ENCODE measurements at regions of chr19 and their contacts with region 1.

Region 1: GRCh38 chr19:18349524-18350128 is 9.2 kb downstream of the PGPEP1 start:
- H3K4me3 Mint-ChIP-seq: no peak overlapping the region
- H3K27ac Mint-ChIP-seq: no peak overlapping the region
- H3K4me1 Mint-ChIP-seq: peaks cover 24% of the 10 kb centered on the region
- H3K27me3 Mint-ChIP-seq: no peaks in the 10 kb centered on the region

Region 2: GRCh38 chr19:18408053-18408476 is 58.4 kb after region 1 on chr19:
- intact Hi-C with region 1: loop called (anchors 2 kb)
- H3K4me3 Mint-ChIP-seq: no peak overlapping the region
- H3K27ac Mint-ChIP-seq: no peak overlapping the region
- H3K4me1 Mint-ChIP-seq: peaks cover 27% of the 10 kb centered on the region
- H3K27me3 Mint-ChIP-seq: peaks cover 14% of the 10 kb centered on the region

Region 3: DNA sequence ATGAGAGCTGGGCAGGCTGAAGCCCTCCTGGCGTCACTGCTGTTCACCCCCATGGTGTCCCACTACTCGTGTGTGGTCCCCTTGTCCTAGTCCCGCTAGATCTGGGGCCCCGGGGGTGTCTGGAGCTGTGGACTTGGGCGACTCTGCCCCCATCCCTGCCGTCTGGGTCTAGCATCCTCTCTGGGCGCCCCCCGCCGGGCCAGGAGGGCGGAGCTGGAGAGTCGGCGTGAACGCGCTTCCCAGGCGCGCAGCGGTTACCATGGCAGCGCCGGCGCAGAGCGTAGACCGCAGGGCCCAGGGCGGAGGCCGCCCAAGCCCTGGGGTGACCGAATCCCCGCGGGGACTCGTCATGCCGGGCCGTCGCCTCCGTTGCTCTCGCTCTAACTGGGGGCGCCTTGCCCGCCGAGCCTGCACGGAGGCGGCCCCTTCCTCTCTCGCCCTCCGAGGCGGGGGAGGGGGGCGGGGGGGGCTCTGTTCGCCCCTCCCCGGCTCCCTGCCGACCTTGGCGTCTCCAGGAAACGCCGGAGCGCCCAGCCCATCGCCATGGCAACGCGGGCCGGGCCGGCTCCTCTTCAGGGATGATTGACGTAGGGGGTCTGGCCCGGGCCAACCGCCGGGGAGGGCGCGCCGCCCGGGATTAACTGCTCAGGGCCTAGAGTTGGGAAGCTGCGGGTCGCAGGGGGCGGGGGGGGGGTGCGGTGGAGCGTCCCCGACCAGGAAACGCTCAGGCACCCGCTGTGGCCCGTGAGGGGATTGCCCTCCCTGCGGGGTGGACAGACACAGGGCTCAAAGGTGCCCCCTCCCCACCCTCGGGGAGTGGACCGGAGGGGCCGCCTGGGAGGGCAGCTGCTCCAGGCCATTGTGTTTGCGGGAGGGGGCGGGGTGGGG is 79.4 kb after region 1 on chr19:
- intact Hi-C with region 1: no loop called
- H3K4me3 Mint-ChIP-seq: peak overlapping the region; percentile 39
- H3K27ac Mint-ChIP-seq: peak overlapping the region; percentile 58
- H3K4me1 Mint-ChIP-seq: peaks cover 60% of the 10 kb centered on the region
- H3K27me3 Mint-ChIP-seq: peaks cover 10% of the 10 kb centered on the region

Region 4: DNA sequence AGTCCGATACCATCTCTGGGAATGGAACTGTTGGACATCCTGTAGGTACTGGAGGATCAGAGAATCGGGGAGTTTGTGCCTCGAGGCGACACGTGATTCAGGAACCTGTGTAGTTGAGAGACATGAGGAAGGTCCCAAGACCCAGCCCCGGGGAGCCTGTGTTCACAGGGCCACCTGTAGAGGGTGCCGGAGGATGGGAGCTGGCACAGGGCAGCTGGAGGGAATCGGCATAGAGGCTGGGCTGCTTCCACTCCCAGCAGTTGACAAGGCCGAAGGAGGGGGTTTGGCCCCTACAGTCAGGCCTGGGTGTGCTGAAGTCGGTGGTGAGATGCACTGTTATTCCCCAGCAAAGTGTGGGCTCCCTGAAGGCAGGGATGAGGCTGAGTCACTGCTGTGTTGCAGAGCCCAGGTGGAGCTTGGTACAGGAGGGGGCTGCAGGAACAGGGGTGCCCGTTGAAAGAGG is 90.8 kb after region 1 on chr19:
- intact Hi-C with region 1: no loop called
- H3K4me3 Mint-ChIP-seq: no peak overlapping the region
- H3K27ac Mint-ChIP-seq: no peak overlapping the region
- H3K4me1 Mint-ChIP-seq: peaks cover 65% of the 10 kb centered on the region
- H3K27me3 Mint-ChIP-seq: peaks cover 41% of the 10 kb centered on the region